Calu3 (cell line): ENCODE measurements at regions of chrX and their contacts with region 1.

Region 1: GRCh38 chrX:53071604-53072417 is 10.4 kb upstream of the TSPYL2 start:
- DNase-seq: peak; percentile 70
- H3K4me3 Mint-ChIP-seq: peak overlapping the region; percentile 65
- H3K27ac Mint-ChIP-seq: peak overlapping the region; percentile 2
- H3K4me1 Mint-ChIP-seq: peaks cover 15% of the 10 kb centered on the region
- H3K27me3 Mint-ChIP-seq: peaks cover 22% of the 10 kb centered on the region
- CTCF ChIP-seq: peak; percentile 39

Region 2: GRCh38 chrX:53093748-53094583 is 22.2 kb after region 1 on chrX and contains the start of gene KANTR:
- CTCF ChIA-PET with region 1: no interaction called
- intact Hi-C with region 1: loop called (anchors 1 kb)
- DNase-seq: peak; percentile 89
- H3K4me3 Mint-ChIP-seq: peak within 1 kb of the TSS; percentile 84
- H3K27ac Mint-ChIP-seq: peak within 1 kb of the TSS; percentile 89
- H3K4me1 Mint-ChIP-seq: peaks cover 14% of the 10 kb centered on the region
- H3K27me3 Mint-ChIP-seq: no peaks in the 10 kb centered on the region
- CTCF ChIP-seq: no peak
- total RNA-seq, gene KANTR: 14.5 and 18.2 TPM in 2 replicates